Activated CD4-positive, alpha-beta T cell treated with anti-CD3 and anti-CD28 coated beads, Interleukin-2, amount 10 ng/mL, durations not matched to agents 24 days and 14 days (primary cell): ENCODE measurements at regions of chr2 and their contacts with region 1.

Region 1: DNA sequence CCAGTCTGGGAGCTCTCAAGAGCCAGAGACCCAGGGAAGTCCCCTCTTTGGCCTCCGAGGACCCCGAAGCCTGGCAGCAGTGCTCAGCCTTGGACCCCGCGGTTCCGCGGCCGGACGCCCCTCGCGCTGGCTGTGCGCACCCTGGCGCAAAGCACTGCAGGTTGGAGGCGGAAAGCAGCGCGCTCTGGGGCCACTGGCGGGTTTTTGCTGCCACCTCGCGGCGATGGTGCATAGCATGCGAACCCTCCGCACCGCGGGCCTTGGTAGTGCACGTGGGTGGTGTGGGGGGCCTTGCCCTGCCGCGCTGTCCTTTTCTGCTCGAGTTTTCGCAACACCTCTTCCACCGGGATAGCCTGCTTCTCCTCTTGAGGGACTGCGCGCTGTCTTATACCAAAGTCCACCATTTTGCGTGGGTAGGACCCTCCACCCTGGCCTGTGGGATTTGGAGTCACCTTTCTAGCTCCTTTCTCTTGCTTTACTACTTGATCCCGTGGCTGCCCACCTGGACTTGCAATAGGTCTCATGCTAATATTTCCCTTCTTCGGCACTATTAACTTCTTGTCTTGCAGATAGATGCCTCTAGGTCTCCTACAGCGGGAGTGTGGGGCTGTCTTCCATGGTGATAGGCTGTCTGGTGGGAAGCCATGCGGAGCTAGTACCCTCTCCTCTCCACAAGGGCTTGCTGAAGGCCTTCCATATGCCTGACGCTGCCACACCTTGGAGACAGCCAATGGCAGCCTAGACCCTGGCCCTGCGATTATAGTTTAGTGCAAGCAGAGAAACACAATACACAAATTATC is 14.3 kb downstream of the SIX3 start:
- DNase-seq: peak; percentile 92
- H3K4me3 Mint-ChIP-seq: peak overlapping the region; percentile 25
- H3K27ac Mint-ChIP-seq: no peak overlapping the region
- H3K4me1 Mint-ChIP-seq: peaks cover 11% of the 10 kb centered on the region
- H3K27me3 Mint-ChIP-seq: peaks cover 68% of the 10 kb centered on the region

Region 2: GRCh38 chr2:44087036-44087713 is 868.6 kb before region 1 on chr2:
- intact Hi-C with region 1: loop called (anchors 5 kb)
- DNase-seq: peak; percentile 96
- H3K4me3 Mint-ChIP-seq: peak overlapping the region; percentile 72
- H3K27ac Mint-ChIP-seq: peak overlapping the region; percentile 83
- H3K4me1 Mint-ChIP-seq: peaks cover 20% of the 10 kb centered on the region
- H3K27me3 Mint-ChIP-seq: no peaks in the 10 kb centered on the region

Region 3: DNA sequence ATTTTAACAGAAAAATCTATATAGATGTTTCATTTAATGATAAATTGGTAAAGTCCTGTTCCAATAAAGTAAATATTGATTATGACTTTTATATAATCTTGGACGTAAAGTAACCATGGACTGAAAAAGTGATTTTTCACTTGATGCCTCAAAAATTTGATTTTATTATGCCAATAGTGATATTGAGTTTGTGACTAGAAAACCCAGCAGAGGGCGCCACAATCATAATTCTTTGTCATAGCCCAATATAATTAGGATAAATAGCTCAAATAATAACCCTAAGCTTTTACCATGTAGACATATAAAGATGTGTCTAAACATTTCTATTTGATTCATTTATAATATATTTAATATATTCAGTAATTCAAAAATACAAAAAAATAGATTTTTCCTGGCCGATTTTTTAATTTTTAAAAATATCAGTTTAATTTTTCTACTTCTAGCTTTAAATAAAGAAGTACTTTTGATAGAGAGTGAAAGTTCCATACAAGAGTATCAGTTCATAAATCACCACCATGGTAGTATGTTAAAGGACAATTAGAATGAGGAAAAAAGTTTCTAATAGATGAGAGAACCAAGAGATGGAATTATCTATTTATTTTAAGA is 563.4 kb before region 1 on chr2:
- intact Hi-C with region 1: loop called (anchors 1 kb)
- DNase-seq: peak; percentile 77
- H3K4me3 Mint-ChIP-seq: no peak overlapping the region
- H3K27ac Mint-ChIP-seq: no peak overlapping the region
- H3K4me1 Mint-ChIP-seq: no peaks in the 10 kb centered on the region
- H3K27me3 Mint-ChIP-seq: no peaks in the 10 kb centered on the region

Region 4: DNA sequence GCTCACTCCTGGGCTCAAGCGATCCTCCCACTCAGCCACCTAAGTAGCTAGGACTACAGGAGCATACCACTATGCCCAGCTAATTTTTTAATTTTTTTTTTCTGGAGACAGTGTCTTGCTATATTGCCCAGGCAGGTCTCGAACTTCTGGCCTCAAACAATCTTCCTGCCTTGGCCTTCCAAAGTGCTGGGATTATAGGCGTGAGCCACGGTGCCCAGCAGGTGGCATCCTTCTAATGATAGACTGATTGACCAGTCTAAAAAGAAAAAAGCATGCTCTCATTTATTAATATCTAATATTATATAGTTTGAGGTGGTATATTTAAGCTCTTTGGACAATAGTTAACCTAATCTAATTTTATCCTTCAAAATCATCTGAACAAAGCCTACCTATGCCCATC is 395.4 kb before region 1 on chr2:
- intact Hi-C with region 1: loop called (anchors 5 kb)
- DNase-seq: no peak
- H3K4me3 Mint-ChIP-seq: no peak overlapping the region
- H3K27ac Mint-ChIP-seq: no peak overlapping the region
- H3K4me1 Mint-ChIP-seq: no peaks in the 10 kb centered on the region
- H3K27me3 Mint-ChIP-seq: no peaks in the 10 kb centered on the region

Region 5: GRCh38 chr2:44941551-44942234 is 14.1 kb before region 1 on chr2 and contains the start of gene SIX3:
- intact Hi-C with region 1: loop called (anchors 2 kb)
- DNase-seq: peak; percentile 82
- H3K4me3 Mint-ChIP-seq: peak within 1 kb of the TSS; percentile 81
- H3K27ac Mint-ChIP-seq: peak within 1 kb of the TSS; percentile 67
- H3K4me1 Mint-ChIP-seq: peaks cover 14% of the 10 kb centered on the region
- H3K27me3 Mint-ChIP-seq: peaks cover 79% of the 10 kb centered on the region
- total RNA-seq, gene SIX3: not detected in 2 replicates